ENCODE measurements at regions of chr1 and their contacts with region 1.

Region 1: GRCh38 chr1:51192213-51192843 is 43.7 kb upstream of the RNF11 start:
- DNase-seq: peak; percentile 71
- H3K4me3 Mint-ChIP-seq: no peak overlapping the region
- H3K27ac Mint-ChIP-seq: no peak overlapping the region
- H3K4me1 Mint-ChIP-seq: no peaks in the 10 kb centered on the region
- H3K27me3 Mint-ChIP-seq: no peaks in the 10 kb centered on the region

Region 2: GRCh38 chr1:50774759-50775351 is 417.5 kb before region 1 on chr1:
- CTCF ChIA-PET with region 1: interaction called, 44 read pairs
- DNase-seq: no peak
- H3K4me3 Mint-ChIP-seq: no peak overlapping the region
- H3K27ac Mint-ChIP-seq: no peak overlapping the region
- H3K4me1 Mint-ChIP-seq: no peaks in the 10 kb centered on the region
- H3K27me3 Mint-ChIP-seq: no peaks in the 10 kb centered on the region

Region 3: DNA sequence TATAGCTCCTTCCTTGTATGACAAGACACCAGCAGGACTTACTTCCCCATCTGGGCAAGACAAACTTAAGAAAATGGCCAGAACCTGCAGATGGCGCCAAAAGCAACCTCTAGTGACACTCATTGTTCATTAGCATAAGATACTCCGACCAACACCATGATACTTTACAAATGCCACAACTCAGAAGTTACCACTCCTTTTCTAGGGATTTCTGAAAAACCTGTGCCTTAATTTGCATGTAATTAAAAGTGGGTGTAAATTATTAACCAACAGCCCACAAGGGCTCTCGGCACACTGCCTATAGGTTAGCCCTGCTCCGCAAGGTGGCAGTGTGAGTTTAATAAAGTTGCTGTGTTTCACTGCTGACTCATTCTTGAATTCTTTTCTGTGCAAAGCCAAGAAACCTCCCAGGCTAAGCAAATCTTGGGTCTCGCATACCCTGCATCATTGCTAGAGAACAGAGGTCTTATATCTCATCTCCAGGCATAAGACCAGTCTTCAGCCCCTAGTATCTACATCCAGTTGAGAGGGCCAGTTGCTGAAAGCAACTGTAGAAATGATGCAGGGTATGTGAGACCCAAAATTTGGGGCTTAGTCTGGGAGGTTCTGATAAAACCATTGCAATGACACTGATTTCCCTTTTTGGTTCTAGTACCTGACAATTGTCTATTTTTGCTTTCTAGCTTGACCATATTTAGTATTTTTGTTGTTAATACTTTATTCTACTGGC is 318.7 kb before region 1 on chr1:
- CTCF ChIA-PET with region 1: interaction called, 14 read pairs
- DNase-seq: peak; percentile 76
- H3K4me3 Mint-ChIP-seq: peak overlapping the region; percentile 20
- H3K27ac Mint-ChIP-seq: no peak overlapping the region
- H3K4me1 Mint-ChIP-seq: no peaks in the 10 kb centered on the region
- H3K27me3 Mint-ChIP-seq: no peaks in the 10 kb centered on the region

Region 4: GRCh38 chr1:50894340-50894739 is 298.0 kb before region 1 on chr1:
- CTCF ChIA-PET with region 1: no interaction called
- DNase-seq: no peak
- H3K4me3 Mint-ChIP-seq: no peak overlapping the region
- H3K27ac Mint-ChIP-seq: no peak overlapping the region
- H3K4me1 Mint-ChIP-seq: no peaks in the 10 kb centered on the region
- H3K27me3 Mint-ChIP-seq: no peaks in the 10 kb centered on the region

Region 5: GRCh38 chr1:50929376-50929958 is 262.9 kb before region 1 on chr1:
- CTCF ChIA-PET with region 1: interaction called, 45 read pairs
- DNase-seq: no peak
- H3K4me3 Mint-ChIP-seq: no peak overlapping the region
- H3K27ac Mint-ChIP-seq: no peak overlapping the region
- H3K4me1 Mint-ChIP-seq: peaks cover 13% of the 10 kb centered on the region
- H3K27me3 Mint-ChIP-seq: no peaks in the 10 kb centered on the region

Region 6: GRCh38 chr1:51296383-51297357 is 104.3 kb after region 1 on chr1:
- CTCF ChIA-PET with region 1: interaction called, 60 read pairs
- DNase-seq: peak; percentile 83
- H3K4me3 Mint-ChIP-seq: peak overlapping the region; percentile 56
- H3K27ac Mint-ChIP-seq: no peak overlapping the region
- H3K4me1 Mint-ChIP-seq: peaks cover 26% of the 10 kb centered on the region
- H3K27me3 Mint-ChIP-seq: peaks cover 33% of the 10 kb centered on the region

Measured in activated naive CD4-positive, alpha-beta T cell treated with anti-CD3 and anti-CD28 coated beads, Interleukin-2, amount 10 ng/mL, durations not matched to agents 7 days and 5 days (primary cell).